CD8-positive, alpha-beta T cell (primary cell): ENCODE measurements at regions of chr16 and their contacts with region 1.

Region 1: DNA sequence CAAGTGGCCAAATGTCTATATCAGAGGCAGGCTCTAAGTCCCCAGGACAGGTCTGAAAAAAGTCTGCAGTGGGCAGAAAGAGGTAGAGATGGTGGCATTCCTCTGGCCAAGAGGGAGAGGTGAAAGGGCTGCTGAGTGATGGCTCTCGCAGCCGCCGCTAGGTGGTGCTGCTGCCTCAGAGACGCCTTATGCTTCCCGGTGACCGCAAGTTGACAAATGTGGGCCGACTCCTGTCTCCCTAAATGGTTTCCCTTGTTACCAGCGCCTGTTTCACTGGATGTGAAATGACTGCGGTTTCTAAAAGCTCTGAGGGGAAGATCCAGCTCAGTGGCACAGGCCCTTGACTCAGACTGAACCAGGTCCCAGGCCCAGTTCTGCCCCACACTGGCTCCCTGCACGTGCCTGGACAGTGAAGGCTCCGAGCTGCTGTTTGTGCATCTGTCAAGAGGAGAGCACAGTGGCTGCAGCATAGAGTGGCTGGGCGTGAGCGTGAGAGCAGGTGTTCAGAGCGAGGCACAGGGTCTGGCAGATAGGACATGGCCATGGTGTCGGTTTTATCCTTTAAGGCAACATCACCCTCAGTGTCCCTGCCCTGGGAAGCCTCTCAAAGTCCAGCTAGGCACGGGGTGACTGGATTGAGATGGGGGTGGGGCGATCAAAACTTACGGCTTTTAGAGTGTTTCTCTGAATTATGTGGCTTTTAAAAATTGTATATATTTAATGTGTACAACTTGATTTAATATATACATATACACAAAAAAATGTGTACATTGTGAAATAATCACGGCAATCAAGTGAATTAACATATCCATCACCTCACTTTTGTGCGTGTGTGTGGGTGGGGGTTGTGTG is 19.9 kb downstream of the CLEC16A start:
- DNase-seq: peak; percentile 57 to 89 (median 82)
- ATAC-seq: peak; percentile 58
- H3K4me3 ChIP-seq: peak overlapping the region in 1 of 2 experiments; percentile 7
- H3K4me3 Mint-ChIP-seq: peak overlapping the region; percentile 18
- H3K27ac ChIP-seq: no peak overlapping the region
- H3K27ac Mint-ChIP-seq: peak overlapping the region; percentile 49
- H3K4me1 ChIP-seq: peaks cover 4% of the 10 kb centered on the region
- H3K4me1 Mint-ChIP-seq: peaks cover 16% of the 10 kb centered on the region
- H3K27me3 ChIP-seq: no peaks in the 10 kb centered on the region
- H3K27me3 Mint-ChIP-seq: no peaks in the 10 kb centered on the region
- CTCF ChIP-seq: peak; percentile 90

Region 2: DNA sequence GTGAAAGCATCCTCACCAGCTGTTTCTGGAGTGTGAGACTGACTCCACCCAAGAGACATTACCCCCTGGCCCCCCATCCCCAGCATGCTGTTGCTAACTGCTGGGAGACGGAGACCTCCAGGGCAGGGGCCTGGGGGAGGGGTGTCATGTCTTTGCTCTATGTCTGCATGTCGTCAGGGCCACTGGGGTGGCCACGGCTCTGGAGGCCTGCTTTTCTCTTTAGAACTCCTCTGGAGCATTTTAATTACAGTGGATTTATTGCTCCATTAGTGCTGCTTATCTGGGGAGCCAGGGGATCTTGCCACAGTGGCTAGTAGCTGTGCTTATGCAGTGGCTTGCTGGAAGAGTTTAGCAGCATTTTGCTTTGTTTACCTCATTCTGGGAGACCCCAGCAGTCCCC is 12.4 kb after region 1 on chr16:
- CTCF ChIA-PET with region 1: interaction called, 12 read pairs
- POLR2A ChIA-PET with region 1: no interaction called
- intact Hi-C with region 1: no loop called
- DNase-seq: no peak
- ATAC-seq: no peak
- H3K4me3 ChIP-seq: no peak overlapping the region
- H3K4me3 Mint-ChIP-seq: no peak overlapping the region
- H3K27ac ChIP-seq: no peak overlapping the region
- H3K27ac Mint-ChIP-seq: no peak overlapping the region
- H3K4me1 ChIP-seq: peaks cover 9% of the 10 kb centered on the region
- H3K4me1 Mint-ChIP-seq: peaks cover 14% of the 10 kb centered on the region
- H3K27me3 ChIP-seq: no peaks in the 10 kb centered on the region
- H3K27me3 Mint-ChIP-seq: no peaks in the 10 kb centered on the region
- CTCF ChIP-seq: no peak

Region 3: DNA sequence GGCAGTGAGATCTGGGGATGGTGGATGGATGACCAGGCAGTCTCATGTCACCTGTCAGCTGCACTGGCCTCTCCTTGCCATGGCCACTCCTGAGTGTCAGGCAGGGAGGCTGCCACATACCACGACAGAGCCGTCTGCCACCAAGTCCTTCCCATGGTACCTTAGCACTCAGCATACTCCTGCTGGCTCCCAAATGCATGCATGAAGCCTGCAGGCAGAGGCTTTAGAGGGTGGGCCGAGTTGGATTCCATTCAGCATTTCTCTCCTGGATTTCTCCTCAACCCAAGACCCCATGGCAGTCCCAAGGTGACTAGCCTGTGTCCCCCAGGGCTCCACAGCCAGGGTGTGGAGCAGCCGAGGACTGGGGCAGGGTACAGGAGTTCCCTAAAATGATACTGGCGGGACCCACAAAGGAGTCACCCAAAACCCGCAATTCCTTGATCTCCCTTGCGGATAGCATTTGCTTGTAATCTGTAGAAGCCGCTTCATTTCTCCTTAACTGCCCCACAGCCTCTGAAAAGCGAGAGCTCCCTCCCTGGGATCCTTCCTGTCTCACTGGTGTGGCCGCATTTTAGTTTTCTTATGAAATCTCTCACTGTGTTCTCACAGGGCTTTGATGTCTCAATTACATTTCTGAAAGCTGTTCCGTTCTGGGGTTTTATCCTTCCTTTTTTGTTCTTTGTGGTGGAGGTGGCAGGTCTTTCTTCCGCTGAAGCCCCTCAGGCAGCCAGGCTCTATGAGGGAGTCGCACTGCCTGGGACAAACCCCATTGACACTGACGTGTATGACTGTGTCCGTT is 150.3 kb after region 1 on chr16:
- CTCF ChIA-PET with region 1: no interaction called
- POLR2A ChIA-PET with region 1: no interaction called
- intact Hi-C with region 1: no loop called
- DNase-seq: peak in 4 of 9 experiments; percentile 18 to 70 (median 34)
- ATAC-seq: peak; percentile 72
- H3K4me3 ChIP-seq: peak overlapping the region in 1 of 2 experiments; percentile 11
- H3K4me3 Mint-ChIP-seq: peak overlapping the region; percentile 60
- H3K27ac ChIP-seq: peak overlapping the region in 1 of 2 experiments; percentile 40
- H3K27ac Mint-ChIP-seq: peak overlapping the region; percentile 53
- H3K4me1 ChIP-seq: peaks cover 22% of the 10 kb centered on the region
- H3K4me1 Mint-ChIP-seq: peaks cover 30% of the 10 kb centered on the region
- H3K27me3 ChIP-seq: no peaks in the 10 kb centered on the region
- H3K27me3 Mint-ChIP-seq: no peaks in the 10 kb centered on the region
- CTCF ChIP-seq: no peak

Region 4: DNA sequence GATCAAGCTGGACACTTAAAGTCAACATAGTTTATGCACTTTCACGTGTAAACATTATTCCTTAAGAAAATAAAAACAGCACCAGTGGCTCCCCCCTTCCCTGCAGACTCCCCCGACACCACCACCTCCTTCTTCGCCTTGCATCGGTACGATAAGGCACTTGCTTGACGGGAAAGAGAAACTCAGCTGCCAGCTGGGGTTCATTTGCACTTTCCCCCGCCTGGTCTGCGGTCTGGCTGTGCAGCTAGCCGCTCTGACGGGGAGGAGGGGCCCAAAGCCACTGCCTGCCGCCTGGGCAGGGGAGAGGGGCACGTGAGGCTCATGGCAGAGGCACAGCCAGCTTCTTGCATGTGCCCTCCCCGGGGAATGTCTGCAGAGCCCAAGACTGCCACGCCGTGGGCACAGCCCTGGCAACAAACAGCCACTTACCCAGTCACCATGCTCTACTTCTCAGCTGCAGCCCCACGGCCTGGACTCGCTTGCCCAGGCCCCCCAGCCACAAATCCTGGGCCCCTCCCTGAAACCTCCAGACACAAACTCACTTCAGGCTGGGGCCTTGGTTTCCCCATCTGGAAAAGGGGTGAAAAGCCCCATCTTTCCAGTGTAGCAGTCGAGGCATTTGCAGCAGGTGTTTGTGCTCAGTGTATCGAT is 333.4 kb after region 1 on chr16:
- CTCF ChIA-PET with region 1: interaction called, 19 read pairs
- POLR2A ChIA-PET with region 1: no interaction called
- intact Hi-C with region 1: loop called in 1 of 2 experiments (anchors 5 kb)
- DNase-seq: peak; percentile 49 to 85 (median 76)
- ATAC-seq: peak; percentile 83
- H3K4me3 ChIP-seq: peak overlapping the region; percentile 20 to 53
- H3K4me3 Mint-ChIP-seq: peak overlapping the region; percentile 76
- H3K27ac ChIP-seq: no peak overlapping the region
- H3K27ac Mint-ChIP-seq: peak overlapping the region; percentile 73
- H3K4me1 ChIP-seq: peaks cover 38% of the 10 kb centered on the region
- H3K4me1 Mint-ChIP-seq: peaks cover 35% of the 10 kb centered on the region
- H3K27me3 ChIP-seq: peaks cover 0 to 4% of the 10 kb centered on the region in 2 experiments
- H3K27me3 Mint-ChIP-seq: peaks cover 2% of the 10 kb centered on the region
- CTCF ChIP-seq: no peak

Region 5: GRCh38 chr16:11379420-11379819 is 415.2 kb after region 1 on chr16:
- CTCF ChIA-PET with region 1: interaction called, 15 read pairs
- POLR2A ChIA-PET with region 1: no interaction called
- intact Hi-C with region 1: no loop called
- DNase-seq: peak in 3 of 9 experiments; percentile 43 to 65 (median 51)
- ATAC-seq: peak; percentile 78
- H3K4me3 ChIP-seq: no peak overlapping the region
- H3K4me3 Mint-ChIP-seq: peak overlapping the region; percentile 65
- H3K27ac ChIP-seq: no peak overlapping the region
- H3K27ac Mint-ChIP-seq: no peak overlapping the region
- H3K4me1 ChIP-seq: no peaks in the 10 kb centered on the region
- H3K4me1 Mint-ChIP-seq: peaks cover 7% of the 10 kb centered on the region
- H3K27me3 ChIP-seq: no peaks in the 10 kb centered on the region
- H3K27me3 Mint-ChIP-seq: no peaks in the 10 kb centered on the region
- CTCF ChIP-seq: no peak

Region 6: GRCh38 chr16:11407047-11407982 is 443.1 kb after region 1 on chr16:
- CTCF ChIA-PET with region 1: interaction called, 31 read pairs
- POLR2A ChIA-PET with region 1: no interaction called
- intact Hi-C with region 1: loop called (anchors 1 to 2 kb)
- DNase-seq: peak; percentile 37 to 78 (median 61)
- ATAC-seq: peak; percentile 82
- H3K4me3 ChIP-seq: no peak overlapping the region
- H3K4me3 Mint-ChIP-seq: no peak overlapping the region
- H3K27ac ChIP-seq: no peak overlapping the region
- H3K27ac Mint-ChIP-seq: no peak overlapping the region
- H3K4me1 ChIP-seq: no peaks in the 10 kb centered on the region
- H3K4me1 Mint-ChIP-seq: no peaks in the 10 kb centered on the region
- H3K27me3 ChIP-seq: no peaks in the 10 kb centered on the region
- H3K27me3 Mint-ChIP-seq: no peaks in the 10 kb centered on the region
- CTCF ChIP-seq: peak; percentile 57

Region 7: GRCh38 chr16:11819798-11820197 is 855.5 kb after region 1 on chr16:
- CTCF ChIA-PET with region 1: interaction called, 3 read pairs
- POLR2A ChIA-PET with region 1: no interaction called
- intact Hi-C with region 1: loop called in 1 of 2 experiments (anchors 10 kb)
- DNase-seq: no peak
- ATAC-seq: no peak
- H3K4me3 ChIP-seq: no peak overlapping the region
- H3K4me3 Mint-ChIP-seq: no peak overlapping the region
- H3K27ac ChIP-seq: no peak overlapping the region
- H3K27ac Mint-ChIP-seq: no peak overlapping the region
- H3K4me1 ChIP-seq: no peaks in the 10 kb centered on the region
- H3K4me1 Mint-ChIP-seq: no peaks in the 10 kb centered on the region
- H3K27me3 ChIP-seq: no peaks in the 10 kb centered on the region
- H3K27me3 Mint-ChIP-seq: no peaks in the 10 kb centered on the region
- CTCF ChIP-seq: no peak